ENCODE measurements at regions of chr3 and their contacts with region 1.

Region 1: DNA sequence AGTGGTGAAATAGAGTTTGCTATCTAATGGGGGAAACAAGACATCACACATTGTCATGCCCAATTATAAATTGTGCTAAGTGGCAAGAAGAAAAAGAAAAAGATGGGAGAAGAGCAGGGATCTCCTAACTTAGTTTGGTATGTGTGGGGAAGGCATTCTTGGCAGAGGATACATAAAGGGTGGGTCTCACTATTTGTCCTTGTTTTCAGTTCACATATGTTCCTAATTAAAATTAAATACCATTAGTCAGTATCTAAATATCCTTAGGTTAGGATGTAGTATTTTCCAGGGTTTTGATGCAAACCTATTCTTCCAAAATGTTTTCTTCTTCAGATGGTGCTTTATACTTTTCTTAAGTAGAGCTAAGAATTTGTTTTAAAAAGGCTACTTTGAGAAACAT is 173.7 kb downstream of the B3GALNT1 start:
- DNase-seq: no peak
- H3K4me3 ChIP-seq: no peak overlapping the region
- H3K4me1 ChIP-seq: no peaks in the 10 kb centered on the region
- H3K27me3 ChIP-seq: peaks cover 5% of the 10 kb centered on the region; the same call in 1 of the 2 replicates

Region 2: GRCh38 chr3:160697628-160698382 is 233.7 kb before region 1 on chr3:
- in situ Hi-C with region 1: loop called (anchors 10 kb)
- DNase-seq: no peak
- H3K4me3 ChIP-seq: no peak overlapping the region
- H3K4me1 ChIP-seq: no peaks in the 10 kb centered on the region
- H3K27me3 ChIP-seq: no peaks in the 10 kb centered on the region